Caco-2 (cell line): ENCODE measurements at regions of chr18 and their contacts with region 1.

Region 1: DNA sequence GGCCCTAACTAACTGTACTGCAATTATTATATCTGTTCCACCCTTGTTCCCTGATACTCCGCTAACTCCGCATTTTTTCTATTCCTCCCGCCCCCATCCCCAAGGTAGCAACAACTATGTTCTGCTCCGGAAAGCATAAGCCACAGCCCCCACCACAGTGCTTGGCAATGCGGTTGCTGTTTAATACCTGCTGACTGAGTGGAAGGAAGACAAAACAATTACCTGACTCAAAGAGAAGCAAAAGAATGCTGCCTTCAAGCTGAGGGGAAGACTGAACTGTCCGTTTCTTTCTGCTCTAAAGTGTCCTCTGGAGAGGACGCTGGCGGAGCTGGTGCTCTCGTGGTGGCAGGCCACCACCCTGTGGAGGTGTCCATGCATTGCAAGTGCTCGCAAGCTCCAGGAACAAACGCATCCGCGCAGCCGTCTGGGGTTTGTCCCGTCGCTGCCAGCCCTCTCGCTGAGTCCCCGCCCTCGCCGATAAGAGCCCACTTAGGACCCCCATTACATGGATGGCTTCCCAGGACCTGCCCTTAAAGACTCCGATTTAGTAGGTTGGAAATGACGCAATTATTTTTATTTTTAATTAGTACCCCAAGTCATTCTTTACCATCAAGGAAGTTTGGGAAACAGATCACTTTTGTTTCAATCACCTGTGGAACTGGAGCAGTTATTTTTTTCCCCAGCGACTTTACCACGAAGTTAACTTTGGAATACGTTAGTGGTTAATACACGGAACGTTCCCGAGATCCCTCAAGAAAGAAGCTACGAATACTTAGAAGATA is 1.6 kb upstream of the MYL12A start:
- DNase-seq: peak; percentile 88 to 89
- H3K4me3 ChIP-seq: peak overlapping the region; percentile 47
- H3K4me3 Mint-ChIP-seq: peak overlapping the region; percentile 78
- H3K27ac Mint-ChIP-seq: peak overlapping the region; percentile 98
- H3K4me1 ChIP-seq: peaks cover 12% of the 10 kb centered on the region
- H3K4me1 Mint-ChIP-seq: peaks cover 22% of the 10 kb centered on the region
- H3K27me3 ChIP-seq: no peaks in the 10 kb centered on the region
- H3K27me3 Mint-ChIP-seq: no peaks in the 10 kb centered on the region
- CTCF ChIP-seq: peak; percentile 90 to 91

Region 2: DNA sequence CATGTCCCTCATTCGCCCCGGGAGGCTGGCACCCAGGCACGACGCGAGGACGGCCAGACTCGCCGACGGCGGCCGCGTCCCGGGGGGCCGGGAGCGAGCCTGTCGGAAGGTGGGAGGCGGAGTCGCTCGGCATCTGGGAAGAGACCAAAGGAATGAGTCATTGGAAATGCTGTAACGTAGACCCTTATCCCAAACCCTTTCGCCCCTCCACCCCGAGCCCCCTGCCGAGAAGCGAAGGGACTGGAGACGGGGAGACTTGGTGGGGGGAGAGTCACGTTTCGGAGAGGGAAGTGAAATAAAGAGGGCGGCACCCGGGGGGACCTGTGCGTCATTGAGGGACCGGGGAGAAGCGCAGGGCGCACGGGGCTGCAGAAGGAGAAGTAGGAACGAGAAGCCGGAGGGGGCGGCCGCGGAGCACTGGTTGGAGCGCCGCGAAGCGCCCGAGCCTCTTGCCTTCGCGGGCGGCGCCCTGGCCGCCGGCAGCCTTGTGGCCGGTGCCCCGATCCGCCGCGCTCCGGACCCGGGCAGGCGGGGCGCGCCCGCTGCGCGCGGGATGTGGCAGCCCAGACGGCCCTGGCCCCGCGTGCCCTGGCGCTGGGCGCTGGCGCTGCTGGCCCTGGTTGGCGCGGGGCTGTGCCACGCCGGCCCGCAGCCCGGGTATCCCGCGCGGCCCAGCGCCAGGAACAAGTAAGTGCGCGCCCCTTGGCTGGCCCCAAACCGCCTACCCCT is 399.2 kb before region 1 on chr18 and contains the start of gene EMILIN2:
- CTCF ChIA-PET with region 1: no interaction called
- POLR2A ChIA-PET with region 1: no interaction called
- intact Hi-C with region 1: loop called (anchors 5 kb)
- DNase-seq: peak; percentile 55 to 70
- H3K4me3 ChIP-seq: peak within 1 kb of the TSS; percentile 80
- H3K4me3 Mint-ChIP-seq: peak within 1 kb of the TSS; percentile 99
- H3K27ac Mint-ChIP-seq: peak within 1 kb of the TSS; percentile 89
- H3K4me1 ChIP-seq: peaks cover 5% of the 10 kb centered on the region; the same call in 1 of the 2 replicates
- H3K4me1 Mint-ChIP-seq: peaks cover 13% of the 10 kb centered on the region
- H3K27me3 ChIP-seq: no peaks in the 10 kb centered on the region
- H3K27me3 Mint-ChIP-seq: no peaks in the 10 kb centered on the region
- CTCF ChIP-seq: no peak
- total RNA-seq, gene EMILIN2: 41.6 and 53.4 TPM in 2 replicates

Region 3: GRCh38 chr18:2985628-2986027 is 260.4 kb before region 1 on chr18:
- CTCF ChIA-PET with region 1: interaction called, 14 read pairs
- POLR2A ChIA-PET with region 1: interaction called, 3 read pairs
- intact Hi-C with region 1: loop called (anchors 2 kb)
- DNase-seq: peak in 1 of 2 experiments; percentile 44
- H3K4me3 ChIP-seq: no peak overlapping the region
- H3K4me3 Mint-ChIP-seq: no peak overlapping the region
- H3K27ac Mint-ChIP-seq: no peak overlapping the region
- H3K4me1 ChIP-seq: peaks cover 52% of the 10 kb centered on the region
- H3K4me1 Mint-ChIP-seq: peaks cover 39% of the 10 kb centered on the region
- H3K27me3 ChIP-seq: no peaks in the 10 kb centered on the region
- H3K27me3 Mint-ChIP-seq: no peaks in the 10 kb centered on the region
- CTCF ChIP-seq: peak; percentile 46 to 56

Region 4: DNA sequence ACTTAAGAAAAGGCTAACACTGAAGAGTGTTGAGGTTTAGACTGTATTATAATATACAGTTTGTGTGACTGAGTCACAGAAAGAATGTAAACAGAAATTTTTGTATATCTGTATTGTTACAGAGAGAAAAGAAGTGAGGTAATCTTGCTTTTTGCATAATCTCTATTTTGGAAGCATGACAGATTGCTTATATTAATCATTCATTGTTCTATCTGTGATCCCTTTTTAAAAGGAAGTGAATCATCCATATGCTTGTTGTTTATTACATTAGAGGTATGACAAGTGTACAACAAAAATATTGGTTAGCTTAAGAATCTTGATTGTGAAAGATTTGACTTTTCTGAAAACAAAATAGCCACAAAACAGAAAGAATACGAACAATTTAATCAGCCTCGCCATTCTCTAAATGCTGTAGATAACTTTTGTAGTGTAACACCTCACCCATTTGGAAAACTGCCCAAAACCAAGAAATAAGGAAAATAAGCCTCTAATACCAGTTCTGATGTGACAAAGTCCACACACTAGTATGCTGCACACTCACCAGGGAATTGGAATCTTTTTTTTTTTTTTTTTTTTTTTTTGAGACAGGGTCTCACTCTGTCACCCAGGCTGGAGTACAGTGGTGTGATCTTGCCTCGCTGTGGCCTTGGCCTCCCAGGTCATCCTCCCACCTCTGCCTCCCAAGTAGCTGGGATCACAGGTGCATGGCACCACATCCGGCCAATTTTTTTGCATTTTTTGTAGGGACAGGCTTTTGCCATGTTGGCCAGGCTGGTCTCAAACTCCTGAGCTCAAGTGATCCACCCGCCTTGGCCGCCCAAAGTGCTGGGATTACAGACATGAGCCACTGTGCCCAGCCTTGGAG is 141.6 kb before region 1 on chr18:
- CTCF ChIA-PET with region 1: no interaction called
- POLR2A ChIA-PET with region 1: no interaction called
- intact Hi-C with region 1: loop called (anchors 5 kb)
- DNase-seq: no peak
- H3K4me3 ChIP-seq: no peak overlapping the region
- H3K4me3 Mint-ChIP-seq: no peak overlapping the region
- H3K27ac Mint-ChIP-seq: peak overlapping the region; percentile 45
- H3K4me1 ChIP-seq: peaks cover 39% of the 10 kb centered on the region
- H3K4me1 Mint-ChIP-seq: peaks cover 28% of the 10 kb centered on the region
- H3K27me3 ChIP-seq: no peaks in the 10 kb centered on the region
- H3K27me3 Mint-ChIP-seq: no peaks in the 10 kb centered on the region
- CTCF ChIP-seq: no peak

Region 5: GRCh38 chr18:3186678-3187658 is 59.1 kb before region 1 on chr18:
- CTCF ChIA-PET with region 1: interaction called, 12 read pairs
- POLR2A ChIA-PET with region 1: no interaction called
- intact Hi-C with region 1: loop called (anchors 1 kb)
- DNase-seq: peak; percentile 57 to 64
- H3K4me3 ChIP-seq: no peak overlapping the region
- H3K4me3 Mint-ChIP-seq: no peak overlapping the region
- H3K27ac Mint-ChIP-seq: no peak overlapping the region
- H3K4me1 ChIP-seq: no peaks in the 10 kb centered on the region
- H3K4me1 Mint-ChIP-seq: peaks cover 12% of the 10 kb centered on the region
- H3K27me3 ChIP-seq: no peaks in the 10 kb centered on the region
- H3K27me3 Mint-ChIP-seq: no peaks in the 10 kb centered on the region
- CTCF ChIP-seq: peak; percentile 35 to 50

Region 6: DNA sequence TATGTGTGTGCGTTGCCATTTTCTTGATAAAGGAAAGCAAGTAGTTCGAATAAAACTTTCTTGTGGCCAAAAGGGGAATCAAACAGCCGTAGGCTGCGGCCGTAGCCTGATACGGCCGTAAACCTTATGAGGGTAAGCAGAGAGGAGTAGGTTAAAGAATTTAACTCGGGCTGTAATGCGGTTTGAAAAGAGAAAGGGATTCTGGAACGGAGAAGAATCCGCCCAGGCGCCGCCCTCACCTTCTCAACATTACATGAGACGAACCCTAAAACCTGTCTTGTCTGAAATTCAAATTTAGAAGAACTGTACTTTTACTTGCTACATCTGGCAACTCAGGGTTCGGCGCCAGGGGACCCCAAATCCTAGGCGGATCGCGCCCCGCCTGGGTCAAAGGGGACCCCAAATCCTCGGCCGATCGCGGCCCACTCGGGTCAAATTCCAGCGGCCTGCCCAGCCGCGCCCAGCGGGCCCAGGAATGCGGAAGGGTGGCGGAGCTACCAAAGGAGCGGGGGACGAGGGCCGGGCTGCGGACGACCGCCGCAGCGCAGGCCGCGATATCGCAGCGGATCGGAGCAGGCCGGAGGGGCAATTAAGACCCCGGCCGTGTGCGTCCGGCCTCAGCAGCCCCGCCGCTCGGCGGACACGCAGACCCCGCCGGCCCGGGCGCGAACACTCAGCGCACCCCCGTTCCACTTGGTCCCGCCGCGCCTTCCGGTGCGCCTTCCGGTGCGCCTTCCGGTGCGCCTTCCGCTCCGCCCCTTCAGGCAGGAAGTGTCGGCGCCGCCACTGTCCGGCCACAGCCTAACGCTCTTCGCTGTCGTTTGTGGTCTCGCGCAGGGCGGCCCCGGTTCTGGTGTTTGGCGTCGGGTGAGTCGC is 15.6 kb after region 1 on chr18 and contains the start of gene MYL12B:
- CTCF ChIA-PET with region 1: interaction called, 3 read pairs
- POLR2A ChIA-PET with region 1: interaction called, 16 read pairs
- intact Hi-C with region 1: loop called (anchors 1 kb)
- DNase-seq: peak; percentile 83 to 89
- H3K4me3 ChIP-seq: peak within 1 kb of the TSS; percentile 97
- H3K4me3 Mint-ChIP-seq: peak within 1 kb of the TSS; percentile 84
- H3K27ac Mint-ChIP-seq: peak within 1 kb of the TSS; percentile 99
- H3K4me1 ChIP-seq: peaks cover 54% of the 10 kb centered on the region
- H3K4me1 Mint-ChIP-seq: peaks cover 38% of the 10 kb centered on the region
- H3K27me3 ChIP-seq: no peaks in the 10 kb centered on the region
- H3K27me3 Mint-ChIP-seq: no peaks in the 10 kb centered on the region
- CTCF ChIP-seq: no peak
- total RNA-seq, gene MYL12B: 457 and 467 TPM in 2 replicates

Region 7: GRCh38 chr18:3541549-3542386 is 295.7 kb after region 1 on chr18:
- CTCF ChIA-PET with region 1: no interaction called
- POLR2A ChIA-PET with region 1: no interaction called
- intact Hi-C with region 1: no loop called
- DNase-seq: no peak
- H3K4me3 ChIP-seq: no peak overlapping the region
- H3K4me3 Mint-ChIP-seq: no peak overlapping the region
- H3K27ac Mint-ChIP-seq: no peak overlapping the region
- H3K4me1 ChIP-seq: peaks cover 9% of the 10 kb centered on the region; the same call in 1 of the 2 replicates
- H3K4me1 Mint-ChIP-seq: peaks cover 7% of the 10 kb centered on the region
- H3K27me3 ChIP-seq: no peaks in the 10 kb centered on the region
- H3K27me3 Mint-ChIP-seq: no peaks in the 10 kb centered on the region
- CTCF ChIP-seq: no peak